OCI-LY7 (cell line): ENCODE measurements at regions of chr15 and their contacts with region 1.

Region 1: GRCh38 chr15:68252925-68253534 is 23.5 kb upstream of the CLN6 start:
- DNase-seq: peak; percentile 85
- H3K4me3 ChIP-seq: no peak overlapping the region
- H3K27ac ChIP-seq: no peak overlapping the region
- H3K4me1 ChIP-seq: peaks cover 15% of the 10 kb centered on the region
- CTCF ChIP-seq: peak; percentile 95

Region 2: DNA sequence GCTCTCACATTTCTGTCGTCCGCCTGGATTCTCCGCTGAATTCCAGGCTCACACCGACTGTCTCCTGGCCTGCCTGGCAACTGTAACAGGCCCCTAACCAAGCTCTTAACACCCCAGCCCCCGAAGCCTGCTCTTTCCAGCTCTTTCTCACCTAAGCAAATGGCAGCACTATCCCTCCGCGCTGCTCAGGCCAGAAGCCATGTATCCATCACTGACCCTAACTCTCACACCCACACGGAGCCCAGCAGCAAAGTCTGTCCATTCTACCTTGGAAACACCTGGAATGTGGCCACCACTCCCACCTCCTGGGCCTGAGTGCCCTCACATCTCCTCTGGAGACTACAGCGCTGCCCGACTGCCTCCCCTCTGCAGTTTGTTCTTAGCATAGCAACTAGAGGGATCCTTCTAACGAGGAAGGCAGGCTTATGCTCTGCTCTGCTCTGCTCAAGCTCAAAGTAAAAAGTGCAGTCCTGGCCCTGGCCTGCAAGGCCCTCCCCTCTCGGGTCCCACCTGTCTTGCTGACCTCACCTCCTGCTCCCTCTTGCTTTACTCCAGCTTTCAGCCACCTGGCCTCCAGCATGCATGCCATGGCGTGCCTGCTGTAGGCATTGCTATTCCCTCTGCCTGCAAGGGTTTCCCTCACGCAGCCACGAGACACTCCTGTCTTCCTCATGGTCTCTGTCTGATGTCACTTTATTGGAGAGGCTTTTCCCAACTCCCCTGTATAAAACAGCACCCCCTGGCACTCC is 51.7 kb after region 1 on chr15:
- CTCF ChIA-PET with region 1: interaction called, 7 read pairs
- POLR2A ChIA-PET with region 1: interaction called, 3 read pairs
- intact Hi-C with region 1: loop called (anchors 1 kb)
- DNase-seq: no peak
- H3K4me3 ChIP-seq: no peak overlapping the region
- H3K27ac ChIP-seq: no peak overlapping the region
- H3K4me1 ChIP-seq: peaks cover 5% of the 10 kb centered on the region
- CTCF ChIP-seq: no peak

Region 3: DNA sequence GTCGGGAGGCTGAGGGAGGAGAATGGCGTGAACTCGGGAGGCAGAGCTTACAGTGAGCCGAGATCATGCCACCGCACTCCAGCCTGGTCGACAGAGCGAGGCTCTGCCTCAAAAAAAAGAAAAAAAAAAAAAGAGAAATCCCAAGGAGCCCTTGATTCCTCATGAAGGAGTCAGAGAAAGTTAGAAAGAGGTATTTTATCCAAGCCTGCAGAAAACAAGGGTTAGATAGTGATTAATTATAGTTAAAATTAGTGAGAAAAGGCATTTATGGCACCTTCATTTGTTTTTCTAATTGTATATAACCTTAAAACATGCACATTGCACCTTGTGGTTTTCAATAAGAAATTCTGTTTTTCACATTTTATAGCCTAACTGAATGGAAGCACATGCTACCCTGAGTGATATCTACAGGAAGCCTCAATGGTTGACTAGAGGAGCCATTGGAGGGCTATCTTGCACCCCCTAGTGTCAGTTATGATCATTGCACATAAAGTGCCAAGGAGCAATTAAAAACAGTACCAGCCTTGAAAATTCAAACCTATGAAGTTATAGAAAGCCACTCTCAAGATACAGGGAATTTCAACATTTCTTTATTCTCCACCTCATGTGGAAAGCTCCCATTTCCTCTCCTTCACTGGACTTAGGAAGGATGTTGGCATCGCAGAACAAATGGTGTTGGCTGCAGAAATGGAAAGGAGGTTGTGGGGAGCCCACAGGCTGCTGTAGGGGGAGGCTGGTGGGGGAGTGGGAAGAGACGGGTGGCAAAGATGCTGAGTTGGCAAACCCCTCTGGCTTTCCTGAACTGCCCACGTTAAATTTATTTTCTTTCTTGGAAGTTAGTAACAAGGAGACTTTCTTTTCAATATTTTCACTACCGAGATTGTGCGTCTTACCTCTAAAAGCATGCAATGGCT is 130.4 kb after region 1 on chr15:
- CTCF ChIA-PET with region 1: no interaction called
- POLR2A ChIA-PET with region 1: interaction called, 4 read pairs
- intact Hi-C with region 1: loop called (anchors 5 kb)
- DNase-seq: peak; percentile 63
- H3K4me3 ChIP-seq: no peak overlapping the region
- H3K27ac ChIP-seq: no peak overlapping the region
- H3K4me1 ChIP-seq: peaks cover 10% of the 10 kb centered on the region
- CTCF ChIP-seq: peak; percentile 90

Region 4: GRCh38 chr15:68543165-68544008 is 290.4 kb after region 1 on chr15:
- CTCF ChIA-PET with region 1: no interaction called
- POLR2A ChIA-PET with region 1: no interaction called
- intact Hi-C with region 1: loop called (anchors 1 kb)
- DNase-seq: no peak
- H3K4me3 ChIP-seq: no peak overlapping the region
- H3K27ac ChIP-seq: no peak overlapping the region
- H3K4me1 ChIP-seq: no peaks in the 10 kb centered on the region
- CTCF ChIP-seq: no peak